ENCODE measurements at regions of chr7 and their contacts with region 1.

Region 1: GRCh38 chr7:47818796-47819606 is 129.3 kb downstream of the PKD1L1 start:
- DNase-seq: peak; percentile 80
- H3K4me3 Mint-ChIP-seq: no peak overlapping the region
- H3K27ac Mint-ChIP-seq: no peak overlapping the region
- H3K4me1 Mint-ChIP-seq: peaks cover 7% of the 10 kb centered on the region
- H3K27me3 Mint-ChIP-seq: no peaks in the 10 kb centered on the region
- CTCF ChIP-seq: peak; percentile 94

Region 2: GRCh38 chr7:47444379-47445057 is 374.5 kb before region 1 on chr7:
- CTCF ChIA-PET with region 1: interaction called, 5 read pairs
- POLR2A ChIA-PET with region 1: no interaction called
- intact Hi-C with region 1: loop called (anchors 1 kb)
- DNase-seq: peak; percentile 38
- H3K4me3 Mint-ChIP-seq: no peak overlapping the region
- H3K27ac Mint-ChIP-seq: no peak overlapping the region
- H3K4me1 Mint-ChIP-seq: peaks cover 45% of the 10 kb centered on the region
- H3K27me3 Mint-ChIP-seq: no peaks in the 10 kb centered on the region
- CTCF ChIP-seq: peak; percentile 63

Region 3: GRCh38 chr7:47669061-47669891 is 149.7 kb before region 1 on chr7:
- CTCF ChIA-PET with region 1: interaction called, 4 read pairs
- POLR2A ChIA-PET with region 1: no interaction called
- intact Hi-C with region 1: loop called (anchors 5 kb)
- DNase-seq: peak; percentile 95
- H3K4me3 Mint-ChIP-seq: no peak overlapping the region
- H3K27ac Mint-ChIP-seq: peak overlapping the region; percentile 93
- H3K4me1 Mint-ChIP-seq: peaks cover 29% of the 10 kb centered on the region
- H3K27me3 Mint-ChIP-seq: no peaks in the 10 kb centered on the region
- CTCF ChIP-seq: no peak

Region 4: DNA sequence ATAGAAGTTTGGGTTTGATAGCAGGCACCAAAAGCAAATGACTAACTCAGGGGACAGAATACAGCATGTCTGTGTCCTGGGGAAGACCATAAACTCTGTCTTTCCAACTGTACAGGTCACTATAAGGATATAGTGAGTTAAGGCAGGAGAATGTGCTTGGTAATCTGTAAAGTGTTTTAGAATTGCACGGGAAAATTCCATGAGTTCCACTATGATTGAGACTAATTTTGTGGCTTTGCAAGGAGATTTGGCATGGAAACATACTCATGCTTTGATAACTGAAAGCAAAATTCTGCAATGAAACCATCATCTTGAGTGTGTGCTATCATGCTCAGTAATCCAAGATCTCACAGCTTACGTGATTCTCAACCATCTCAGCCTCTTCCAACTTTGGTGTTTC is 23.4 kb before region 1 on chr7:
- CTCF ChIA-PET with region 1: interaction called, 10 read pairs
- POLR2A ChIA-PET with region 1: interaction called, 5 read pairs
- intact Hi-C with region 1: no loop called
- DNase-seq: no peak
- H3K4me3 Mint-ChIP-seq: no peak overlapping the region
- H3K27ac Mint-ChIP-seq: no peak overlapping the region
- H3K4me1 Mint-ChIP-seq: peaks cover 5% of the 10 kb centered on the region
- H3K27me3 Mint-ChIP-seq: no peaks in the 10 kb centered on the region
- CTCF ChIP-seq: no peak

Region 5: DNA sequence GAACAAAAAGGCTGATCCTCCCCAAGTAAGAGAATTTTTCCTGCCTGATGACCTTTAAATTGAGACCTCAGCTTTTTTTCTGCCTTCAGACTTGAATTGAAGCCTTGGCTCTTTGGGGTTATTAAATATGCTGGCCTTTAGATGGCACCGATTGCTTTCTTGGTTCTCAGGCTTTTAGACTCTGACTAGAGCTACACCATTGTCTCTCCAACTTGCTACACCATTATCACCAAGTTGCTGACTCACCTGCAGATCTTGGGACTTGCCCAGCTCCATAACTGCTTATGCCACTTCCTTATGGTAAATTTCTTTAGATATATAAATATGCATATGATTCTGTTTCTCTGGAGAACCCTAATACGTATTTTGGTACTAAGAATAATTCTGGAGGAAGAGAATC is 349.2 kb after region 1 on chr7:
- CTCF ChIA-PET with region 1: no interaction called
- POLR2A ChIA-PET with region 1: no interaction called
- intact Hi-C with region 1: no loop called
- DNase-seq: peak; percentile 33
- H3K4me3 Mint-ChIP-seq: no peak overlapping the region
- H3K27ac Mint-ChIP-seq: no peak overlapping the region
- H3K4me1 Mint-ChIP-seq: peaks cover 7% of the 10 kb centered on the region
- H3K27me3 Mint-ChIP-seq: no peaks in the 10 kb centered on the region
- CTCF ChIP-seq: no peak

Region 6: DNA sequence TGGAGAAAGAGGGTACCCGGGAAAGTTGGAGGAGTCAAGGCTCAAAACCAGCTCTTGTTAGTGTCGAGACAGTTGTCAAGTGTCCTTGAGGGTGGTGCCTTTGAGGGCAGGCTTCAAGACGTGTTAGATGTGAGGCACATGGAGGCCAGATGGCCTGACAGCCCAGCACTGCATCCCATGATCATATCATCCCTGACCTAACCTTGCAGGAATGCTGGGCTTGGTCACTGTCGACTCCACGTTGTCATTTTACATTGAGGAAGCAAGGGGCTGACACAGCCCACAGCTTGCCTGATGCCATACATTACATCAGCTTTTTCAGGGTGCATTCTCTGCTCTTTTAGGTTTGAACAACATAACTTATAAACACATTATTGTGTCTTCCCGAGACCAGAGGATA is 466.4 kb after region 1 on chr7:
- CTCF ChIA-PET with region 1: no interaction called
- POLR2A ChIA-PET with region 1: no interaction called
- intact Hi-C with region 1: no loop called
- DNase-seq: no peak
- H3K4me3 Mint-ChIP-seq: no peak overlapping the region
- H3K27ac Mint-ChIP-seq: no peak overlapping the region
- H3K4me1 Mint-ChIP-seq: peaks cover 12% of the 10 kb centered on the region
- H3K27me3 Mint-ChIP-seq: no peaks in the 10 kb centered on the region
- CTCF ChIP-seq: no peak

Measured in MCF 10A (cell line).